SK-N-SH (cell line): ENCODE measurements at regions of chr7 and their contacts with region 1.

Region 1: DNA sequence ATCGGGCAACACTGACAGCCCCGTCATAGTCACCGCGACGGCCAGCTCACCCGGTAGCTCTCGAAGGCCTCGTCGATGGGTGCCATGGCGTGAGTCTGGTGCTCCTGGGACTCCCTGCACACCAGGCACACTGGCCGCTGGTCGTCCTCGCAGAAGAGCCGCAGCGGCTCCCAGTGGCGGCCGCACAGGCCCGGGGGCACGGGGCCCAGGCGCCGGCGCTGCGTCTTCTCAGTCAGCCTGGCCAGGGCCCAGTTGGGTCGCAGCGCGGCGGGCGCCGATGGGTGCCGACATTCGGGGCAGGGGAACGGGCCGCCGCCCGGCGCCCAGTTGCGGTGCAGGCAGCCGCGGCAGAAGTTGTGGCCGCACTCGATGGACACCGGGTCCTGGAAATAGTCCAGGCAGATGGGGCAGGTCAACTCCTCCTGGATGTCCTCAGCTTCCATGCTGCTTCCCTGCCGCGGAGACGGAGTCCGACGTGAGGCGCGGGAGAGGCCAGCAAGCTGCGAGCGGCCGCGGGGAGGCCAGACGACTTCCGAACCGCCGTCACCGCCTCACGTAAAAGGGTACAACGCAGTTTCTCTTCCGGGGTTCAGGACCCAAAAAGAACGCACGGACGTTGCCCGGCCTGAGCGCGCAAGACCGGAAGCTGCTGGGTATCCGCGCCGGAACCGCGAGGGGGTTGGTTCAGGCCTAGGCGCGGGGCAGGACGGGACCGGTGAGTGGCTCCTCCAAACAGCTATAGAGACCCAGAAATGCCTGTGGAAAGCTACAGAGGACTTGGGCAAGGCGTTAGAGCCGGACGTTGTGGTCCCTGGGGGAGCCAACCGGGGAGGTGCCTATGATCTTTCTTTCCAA is at the start of gene TRIM4:
- DNase-seq: peak; percentile 87
- H3K4me3 ChIP-seq: peak within 1 kb of the TSS; percentile 59 to 64
- H3K27ac ChIP-seq: peak within 1 kb of the TSS; percentile 62 to 64
- H3K4me1 ChIP-seq: no peaks in the 10 kb centered on the region; a peak in 1 of 4 replicates
- H3K27me3 ChIP-seq: peaks cover 19% of the 10 kb centered on the region; the same call in 1 of the 2 replicates
- CTCF ChIP-seq: peak; percentile 20; the same call in 1 of the 2 replicates
- EP300 ChIP-seq: no peak
- RAD21 ChIP-seq: no peak
- polyA plus RNA-seq, gene TRIM4: 6.6 and 7.6 TPM in 2 replicates

Region 2: DNA sequence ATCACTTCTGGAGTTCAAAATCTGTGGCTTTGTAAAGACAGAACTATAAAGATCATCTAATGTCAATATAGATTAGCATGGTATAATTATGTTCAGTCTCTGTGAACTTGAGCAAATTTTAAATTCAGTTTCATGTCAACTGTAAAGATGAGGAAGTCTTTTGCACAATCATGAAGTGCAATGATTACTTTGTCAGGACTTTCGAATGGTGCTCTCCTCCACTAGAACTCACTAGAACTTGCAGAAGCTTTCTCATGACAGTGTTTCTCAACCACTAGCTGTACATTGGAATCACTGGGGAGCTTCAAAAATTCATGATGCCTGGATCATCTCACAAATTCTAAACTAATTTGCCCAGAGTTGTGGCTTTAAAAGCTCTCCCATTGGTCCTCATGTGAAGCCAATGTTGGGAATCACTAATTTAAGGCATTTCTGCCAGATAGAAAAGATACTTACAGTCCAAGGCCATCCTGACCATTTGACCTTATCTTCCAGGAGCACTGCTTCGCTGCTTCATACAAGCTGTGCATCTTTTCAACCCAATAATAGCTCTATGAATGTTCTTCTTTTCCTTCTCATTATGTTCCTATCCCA is 55.2 kb before region 1 on chr7:
- CTCF ChIA-PET with region 1: no interaction called
- POLR2A ChIA-PET with region 1: no interaction called
- DNase-seq: no peak
- H3K4me3 ChIP-seq: no peak overlapping the region
- H3K27ac ChIP-seq: no peak overlapping the region
- H3K4me1 ChIP-seq: peaks cover 0 to 5% of the 10 kb centered on the region in 2 experiments; a peak in 1 of 4 replicates
- H3K27me3 ChIP-seq: no peaks in the 10 kb centered on the region; the same call in 1 of the 2 replicates
- CTCF ChIP-seq: no peak
- EP300 ChIP-seq: no peak
- RAD21 ChIP-seq: no peak

Region 3: DNA sequence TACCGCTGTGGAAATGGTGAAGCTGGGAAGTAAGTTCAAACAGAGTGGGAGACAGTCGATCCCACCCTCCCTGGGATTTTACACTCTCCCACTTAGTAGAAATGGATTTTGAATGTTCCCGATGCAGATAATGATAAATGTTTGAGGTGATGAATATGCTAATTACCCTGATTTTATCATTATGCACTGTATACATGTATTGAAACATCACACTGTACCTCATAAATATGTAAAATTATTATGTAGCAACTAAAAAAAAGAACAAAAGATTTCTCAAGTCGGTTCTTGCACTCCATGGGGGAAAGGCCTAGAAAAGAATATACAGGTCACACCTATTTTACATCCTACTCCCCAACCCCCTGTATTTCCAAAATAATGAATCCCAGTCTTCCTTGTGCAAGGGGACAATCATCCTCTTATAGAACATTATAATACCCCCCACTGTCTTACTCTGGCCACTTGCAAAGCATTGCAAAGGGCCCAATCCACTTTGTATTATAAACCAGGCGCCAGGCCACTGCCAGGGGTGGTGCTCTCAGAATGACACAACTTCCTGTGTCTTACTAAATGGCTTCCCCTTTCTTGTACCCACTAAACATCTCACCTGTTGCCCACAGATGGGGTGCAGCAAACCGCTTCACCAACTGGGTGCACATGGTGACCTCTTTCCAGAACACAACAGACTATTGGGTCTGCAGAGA is 21.7 kb before region 1 on chr7:
- CTCF ChIA-PET with region 1: interaction called, 15 read pairs
- POLR2A ChIA-PET with region 1: no interaction called
- DNase-seq: no peak
- H3K4me3 ChIP-seq: no peak overlapping the region
- H3K27ac ChIP-seq: no peak overlapping the region
- H3K4me1 ChIP-seq: peaks cover 0 to 13% of the 10 kb centered on the region in 2 experiments; a peak in 2 of 4 replicates
- H3K27me3 ChIP-seq: no peaks in the 10 kb centered on the region; the same call in 1 of the 2 replicates
- CTCF ChIP-seq: no peak
- EP300 ChIP-seq: no peak
- RAD21 ChIP-seq: no peak

Region 4: DNA sequence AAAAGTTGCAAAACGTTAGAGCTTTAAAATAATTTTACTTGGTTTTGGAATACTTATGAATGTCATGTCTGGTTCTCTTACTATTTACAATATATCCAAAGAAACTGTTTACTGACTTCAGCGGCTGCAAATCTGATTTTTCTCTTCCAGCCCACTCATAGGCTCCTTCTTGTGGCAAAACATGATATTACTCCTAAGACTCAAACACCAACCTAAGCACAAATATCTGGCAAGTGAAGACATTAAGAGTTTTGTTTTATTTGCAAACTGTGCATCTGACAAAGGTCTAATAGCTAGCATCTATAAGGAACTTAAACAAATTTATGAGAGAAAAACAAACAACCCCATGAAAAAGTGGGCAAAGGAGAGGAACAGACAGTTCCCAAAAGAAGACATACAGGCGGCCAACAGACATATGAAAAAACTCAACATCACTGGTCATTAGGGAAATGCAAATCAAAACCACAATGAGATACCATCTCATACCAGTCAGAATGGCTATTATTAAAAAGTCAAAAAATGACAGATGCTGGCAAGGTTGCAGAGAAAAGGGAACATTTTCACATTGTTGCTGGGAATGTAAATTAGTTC is 30.5 kb after region 1 on chr7:
- CTCF ChIA-PET with region 1: interaction called, 27 read pairs
- POLR2A ChIA-PET with region 1: interaction called, 5 read pairs
- DNase-seq: no peak
- H3K4me3 ChIP-seq: no peak overlapping the region
- H3K27ac ChIP-seq: no peak overlapping the region
- H3K4me1 ChIP-seq: no peaks in the 10 kb centered on the region
- H3K27me3 ChIP-seq: peaks cover 26% of the 10 kb centered on the region; the same call in 1 of the 2 replicates
- CTCF ChIP-seq: peak; percentile 57
- EP300 ChIP-seq: no peak
- RAD21 ChIP-seq: peak; percentile 52